Activated CD8-positive, alpha-beta T cell treated with anti-CD3 and anti-CD28 coated beads for 36 hours (primary cell): ENCODE measurements at regions of chr6 and their contacts with region 1.

Region 1: DNA sequence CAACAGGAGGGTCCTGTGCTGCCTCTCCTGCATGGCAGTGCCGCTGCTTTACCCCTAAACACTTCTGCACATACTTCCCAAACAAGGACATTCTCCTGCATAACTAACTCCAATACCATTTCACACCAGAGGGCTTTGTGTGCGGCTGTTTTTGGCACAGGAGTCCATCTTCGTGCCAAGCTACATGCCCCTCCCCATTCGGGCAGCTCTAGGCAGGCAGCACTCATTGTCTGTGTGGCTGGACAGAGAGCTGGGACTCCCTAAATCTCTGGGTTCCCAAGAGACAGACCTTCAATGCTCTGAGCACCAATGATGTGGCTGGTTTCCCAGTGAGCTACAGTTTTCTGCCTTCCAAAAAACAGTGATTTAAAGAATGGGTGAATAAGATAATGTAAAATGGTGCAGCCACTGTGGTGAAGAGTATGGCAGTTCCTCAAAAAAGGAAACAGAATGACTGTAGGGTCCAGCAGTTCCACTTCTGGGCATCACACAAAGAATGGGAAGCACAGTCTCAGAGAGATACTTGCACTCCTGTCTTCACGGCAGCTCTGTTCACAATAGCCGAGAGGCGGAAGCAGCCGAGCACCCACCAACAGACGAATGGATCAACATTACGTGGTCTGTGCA is 80.3 kb upstream of the DUSP22 start:
- DNase-seq: no peak
- ATAC-seq: no peak
- H3K4me3 Mint-ChIP-seq: no peak overlapping the region
- H3K27ac Mint-ChIP-seq: no peak overlapping the region
- H3K4me1 Mint-ChIP-seq: peaks cover 47% of the 10 kb centered on the region
- H3K27me3 Mint-ChIP-seq: no peaks in the 10 kb centered on the region
- CTCF ChIP-seq: no peak

Region 2: DNA sequence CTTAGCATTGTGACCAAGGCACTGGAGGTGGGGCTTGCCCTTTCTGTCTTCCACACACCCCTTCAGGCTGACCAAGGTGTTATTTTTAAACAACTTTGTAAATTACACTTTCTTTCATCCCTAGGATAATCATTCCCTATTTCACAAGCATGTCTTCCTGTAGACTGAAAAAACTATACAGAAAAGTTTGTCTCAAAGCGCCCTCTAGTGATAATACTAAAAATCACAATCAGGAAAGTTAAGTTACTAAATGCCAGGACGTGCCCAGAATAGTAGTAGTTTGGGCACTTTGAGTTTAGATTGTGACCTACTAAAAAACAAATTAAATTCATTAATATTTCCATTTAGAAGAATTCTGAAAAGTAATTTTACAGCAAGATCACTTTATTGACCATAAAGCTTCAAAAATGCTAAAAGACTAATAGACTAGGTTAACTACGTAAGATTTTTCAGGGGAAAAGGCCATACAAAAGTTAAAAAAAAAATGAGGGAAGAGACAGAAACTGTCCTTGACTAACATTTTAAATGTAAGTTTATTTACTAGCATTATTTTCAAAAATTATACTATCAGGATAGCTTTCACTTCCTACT is 43.0 kb before region 1 on chr6:
- CTCF ChIA-PET with region 1: no interaction called
- POLR2A ChIA-PET with region 1: no interaction called
- intact Hi-C with region 1: no loop called
- DNase-seq: no peak
- ATAC-seq: no peak
- H3K4me3 Mint-ChIP-seq: no peak overlapping the region
- H3K27ac Mint-ChIP-seq: no peak overlapping the region
- H3K4me1 Mint-ChIP-seq: peaks cover 4% of the 10 kb centered on the region
- H3K27me3 Mint-ChIP-seq: peaks cover 4% of the 10 kb centered on the region
- CTCF ChIP-seq: peak; percentile 76

Region 3: DNA sequence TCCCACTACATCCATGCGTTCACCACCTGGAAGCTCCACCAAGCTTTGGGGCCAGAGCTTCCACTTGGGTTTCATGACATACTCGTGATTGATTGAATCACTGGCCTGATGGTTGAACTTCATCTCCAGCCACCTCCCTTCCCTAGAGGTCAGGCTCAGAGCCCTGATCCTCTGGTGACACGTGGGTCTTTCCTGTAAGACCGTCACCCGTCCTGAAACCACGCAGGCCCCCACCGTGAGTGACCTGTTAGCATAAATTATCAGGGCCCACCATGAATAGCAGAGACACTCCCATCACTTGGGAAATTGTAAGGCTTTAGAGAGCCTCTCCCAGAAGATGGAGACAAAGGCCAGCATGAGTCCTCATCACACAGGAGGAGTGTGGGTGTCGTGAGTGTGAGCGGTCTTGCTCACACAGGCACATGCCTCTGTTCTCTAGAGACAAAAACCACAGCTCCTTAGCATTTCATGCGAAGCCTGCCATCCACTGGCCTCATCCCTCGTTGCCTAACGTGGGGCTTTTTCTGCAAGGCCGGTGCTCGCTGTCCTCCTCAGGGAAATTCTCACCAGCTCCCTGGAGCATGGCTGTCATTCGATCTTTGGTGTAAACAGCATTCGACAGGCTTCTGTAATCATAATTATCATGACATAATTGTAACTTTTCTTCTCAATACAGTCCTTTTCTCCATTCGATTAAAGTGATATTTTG is 15.2 kb after region 1 on chr6:
- CTCF ChIA-PET with region 1: interaction called, 15 read pairs
- POLR2A ChIA-PET with region 1: interaction called, 12 read pairs
- intact Hi-C with region 1: no loop called
- DNase-seq: peak; percentile 61
- ATAC-seq: no peak
- H3K4me3 Mint-ChIP-seq: no peak overlapping the region
- H3K27ac Mint-ChIP-seq: peak overlapping the region; percentile 4
- H3K4me1 Mint-ChIP-seq: peaks cover 74% of the 10 kb centered on the region
- H3K27me3 Mint-ChIP-seq: peaks cover 1% of the 10 kb centered on the region
- CTCF ChIP-seq: no peak

Region 4: GRCh38 chr6:246352-246751 is 34.4 kb after region 1 on chr6:
- CTCF ChIA-PET with region 1: no interaction called
- POLR2A ChIA-PET with region 1: no interaction called
- intact Hi-C with region 1: no loop called
- DNase-seq: no peak
- ATAC-seq: no peak
- H3K4me3 Mint-ChIP-seq: no peak overlapping the region
- H3K27ac Mint-ChIP-seq: no peak overlapping the region
- H3K4me1 Mint-ChIP-seq: peaks cover 7% of the 10 kb centered on the region
- H3K27me3 Mint-ChIP-seq: no peaks in the 10 kb centered on the region
- CTCF ChIP-seq: no peak

Region 5: DNA sequence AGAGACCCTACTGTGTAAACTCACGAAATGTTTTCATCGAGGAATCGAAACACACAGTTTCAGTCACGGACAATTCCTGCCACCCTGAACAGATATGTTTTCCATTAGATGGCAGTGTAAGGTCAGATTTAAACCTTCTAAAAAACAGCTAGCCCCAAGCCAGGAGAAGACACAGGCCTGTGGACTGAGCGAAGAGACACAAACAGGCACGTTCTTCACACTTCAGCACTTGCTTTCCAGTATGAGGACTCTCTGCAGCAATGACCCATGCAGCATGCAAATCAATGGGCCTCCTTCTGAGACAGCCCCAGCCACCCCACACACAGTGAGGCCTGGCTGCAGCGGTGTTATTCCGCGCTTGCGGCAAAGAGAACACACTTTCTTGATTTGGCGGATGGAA is 413.0 kb after region 1 on chr6:
- CTCF ChIA-PET with region 1: no interaction called
- POLR2A ChIA-PET with region 1: no interaction called
- intact Hi-C with region 1: no loop called
- DNase-seq: no peak
- ATAC-seq: no peak
- H3K4me3 Mint-ChIP-seq: no peak overlapping the region
- H3K27ac Mint-ChIP-seq: no peak overlapping the region
- H3K4me1 Mint-ChIP-seq: peaks cover 16% of the 10 kb centered on the region
- H3K27me3 Mint-ChIP-seq: no peaks in the 10 kb centered on the region
- CTCF ChIP-seq: no peak